Activated B cell treated with CpG ODN at 0.5 μM for 24 hours (primary cell): ENCODE measurements at regions of chr6 and their contacts with region 1.

Region 1: GRCh38 chr6:41735427-41736356 is at the start of gene TFEB:
- DNase-seq: peak; percentile 99
- ATAC-seq: peak; percentile 41
- H3K4me3 Mint-ChIP-seq: peak within 1 kb of the TSS; percentile 84
- H3K27ac Mint-ChIP-seq: peak within 1 kb of the TSS; percentile 84
- H3K4me1 Mint-ChIP-seq: peaks cover 28% of the 10 kb centered on the region
- H3K27me3 Mint-ChIP-seq: no peaks in the 10 kb centered on the region
- CTCF ChIP-seq: peak; percentile 26
- total RNA-seq, gene TFEB: 203 and 205 TPM in 2 replicates

Region 2: DNA sequence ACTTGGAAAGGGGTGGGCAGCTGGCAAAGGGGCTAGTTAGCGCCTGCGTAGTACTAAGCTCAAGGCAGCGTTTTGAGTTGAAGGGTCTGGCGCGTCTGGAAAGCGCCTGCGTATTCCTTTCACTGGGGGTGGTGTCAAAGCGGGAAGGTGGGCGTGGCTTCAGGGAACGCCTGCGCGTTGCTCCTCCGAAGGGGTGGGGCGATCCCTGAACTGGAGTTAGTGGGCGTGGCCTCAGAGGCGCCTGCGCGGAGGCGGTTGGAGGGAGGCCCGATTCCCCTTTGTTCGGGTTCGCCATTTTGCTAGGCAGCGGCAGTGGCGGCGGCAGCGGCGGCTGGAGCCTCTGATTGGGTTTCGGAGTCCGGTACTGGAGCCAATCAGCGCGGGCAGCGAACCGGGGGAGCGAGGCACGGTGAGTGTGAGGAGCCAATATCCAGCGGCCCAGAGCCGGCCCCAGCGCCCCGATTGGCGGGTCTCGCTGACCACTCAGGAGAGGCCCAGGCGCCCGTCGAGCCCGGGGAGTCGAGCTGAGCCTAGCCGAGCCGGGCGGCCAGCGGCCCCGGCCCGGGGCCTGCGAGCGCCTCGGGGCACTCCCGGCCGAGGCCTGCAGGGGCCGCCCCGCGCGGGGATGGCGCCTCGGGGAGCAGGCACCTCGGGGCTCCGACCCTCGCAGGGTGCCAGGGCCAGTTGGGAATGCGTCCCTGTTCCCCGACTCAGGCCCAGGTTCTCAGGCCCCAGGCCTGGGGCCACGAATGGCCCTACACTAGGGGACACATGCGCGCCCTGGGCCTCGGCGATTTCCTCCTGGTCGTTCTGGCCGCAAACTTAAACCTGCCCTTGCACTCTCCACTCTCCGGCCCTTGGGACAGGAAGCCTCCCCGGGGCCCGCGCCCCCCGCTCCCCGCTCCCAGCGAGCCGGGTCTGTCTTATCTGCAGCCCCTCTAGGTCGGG is 662.7 kb before region 1 on chr6 and contains the start of gene NFYA:
- CTCF ChIA-PET with region 1: no interaction called
- POLR2A ChIA-PET with region 1: interaction called, 10 read pairs
- intact Hi-C with region 1: loop called (anchors 1 kb)
- DNase-seq: peak; percentile 100
- ATAC-seq: peak; percentile 63
- H3K4me3 Mint-ChIP-seq: peak within 1 kb of the TSS; percentile 96
- H3K27ac Mint-ChIP-seq: peak within 1 kb of the TSS; percentile 98
- H3K4me1 Mint-ChIP-seq: peaks cover 47% of the 10 kb centered on the region
- H3K27me3 Mint-ChIP-seq: no peaks in the 10 kb centered on the region
- CTCF ChIP-seq: no peak
- total RNA-seq, gene NFYA: 33.7 and 35.1 TPM in 2 replicates

Region 3: DNA sequence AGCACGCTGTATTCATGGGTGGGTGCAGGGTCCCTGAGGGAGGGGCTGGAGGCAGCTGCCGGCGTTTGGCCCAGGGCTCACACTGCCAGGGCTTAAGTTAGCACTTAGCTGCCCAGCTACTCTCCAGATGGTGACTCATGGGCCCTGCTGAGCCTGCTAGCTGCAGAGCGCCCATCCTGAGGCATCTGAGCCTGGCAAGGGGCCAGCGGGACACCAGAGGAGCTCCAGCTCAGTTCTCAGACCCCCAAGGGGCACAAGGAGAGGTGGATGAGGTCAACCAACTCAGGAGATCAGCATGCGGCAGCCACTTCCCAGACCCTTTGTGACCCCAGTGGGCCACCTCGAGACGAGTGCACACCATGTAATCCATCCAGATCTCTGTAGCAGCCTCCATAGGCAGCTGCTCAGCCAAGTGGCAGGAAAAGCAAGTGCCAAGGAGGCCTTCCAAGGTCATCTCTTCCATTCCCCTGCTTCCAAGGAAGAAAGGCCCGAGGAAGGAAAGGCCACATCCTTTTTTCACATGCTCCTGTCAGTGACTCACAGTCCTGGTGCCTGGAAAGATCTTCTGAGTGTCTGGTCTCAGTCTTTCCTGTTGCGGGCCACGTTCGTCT is 154.2 kb before region 1 on chr6:
- CTCF ChIA-PET with region 1: no interaction called
- POLR2A ChIA-PET with region 1: no interaction called
- intact Hi-C with region 1: no loop called
- DNase-seq: no peak
- ATAC-seq: no peak
- H3K4me3 Mint-ChIP-seq: no peak overlapping the region
- H3K27ac Mint-ChIP-seq: no peak overlapping the region
- H3K4me1 Mint-ChIP-seq: peaks cover 16% of the 10 kb centered on the region
- H3K27me3 Mint-ChIP-seq: no peaks in the 10 kb centered on the region
- CTCF ChIP-seq: no peak

Region 4: DNA sequence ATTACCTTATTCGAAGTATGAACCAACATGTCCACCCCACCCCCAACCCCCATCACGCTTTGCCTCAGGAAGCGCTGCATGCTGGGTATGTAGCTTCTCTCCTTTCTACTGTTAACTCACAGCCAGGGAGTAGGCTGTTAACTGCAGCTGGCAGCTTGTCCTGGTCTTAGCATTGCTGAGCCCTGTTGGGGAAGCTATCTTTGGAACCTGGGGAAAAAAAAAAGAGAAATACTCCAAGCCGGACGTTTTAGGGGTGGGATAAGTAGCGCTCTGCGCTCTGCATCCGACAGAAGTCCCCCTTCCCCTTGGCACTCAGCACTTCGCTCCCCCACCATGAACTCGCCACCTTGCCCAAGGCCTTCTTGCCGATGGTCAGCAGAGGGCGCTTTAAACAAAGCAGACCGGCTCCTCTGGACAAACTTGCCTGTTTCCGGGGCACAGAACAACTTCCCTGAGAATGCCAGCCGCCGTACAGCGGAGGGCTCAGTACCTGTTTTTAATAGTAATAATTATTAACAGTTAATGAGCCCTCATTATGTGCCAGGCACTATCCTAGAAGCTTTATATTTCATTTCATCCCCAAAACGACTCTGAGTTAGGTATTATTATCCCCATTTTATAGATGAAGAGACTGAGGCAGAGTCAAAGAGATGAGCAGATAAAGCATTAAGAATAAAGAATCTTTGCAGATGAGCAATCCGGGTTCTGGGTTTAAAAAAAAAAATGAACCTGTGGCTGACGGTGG is 132.7 kb before region 1 on chr6:
- CTCF ChIA-PET with region 1: interaction called, 3 read pairs
- POLR2A ChIA-PET with region 1: interaction called, 13 read pairs
- intact Hi-C with region 1: loop called (anchors 2 kb)
- DNase-seq: peak; percentile 55
- ATAC-seq: peak; percentile 85
- H3K4me3 Mint-ChIP-seq: peak overlapping the region; percentile 46
- H3K27ac Mint-ChIP-seq: no peak overlapping the region
- H3K4me1 Mint-ChIP-seq: peaks cover 10% of the 10 kb centered on the region
- H3K27me3 Mint-ChIP-seq: no peaks in the 10 kb centered on the region
- CTCF ChIP-seq: no peak

Region 5: GRCh38 chr6:41689171-41690008 is 46.3 kb before region 1 on chr6:
- CTCF ChIA-PET with region 1: interaction called, 32 read pairs
- POLR2A ChIA-PET with region 1: interaction called, 126 read pairs
- intact Hi-C with region 1: no loop called
- DNase-seq: no peak
- ATAC-seq: no peak
- H3K4me3 Mint-ChIP-seq: no peak overlapping the region
- H3K27ac Mint-ChIP-seq: peak overlapping the region; percentile 50
- H3K4me1 Mint-ChIP-seq: peaks cover 23% of the 10 kb centered on the region
- H3K27me3 Mint-ChIP-seq: no peaks in the 10 kb centered on the region
- CTCF ChIP-seq: no peak

Region 6: GRCh38 chr6:41713161-41713649 is 22.5 kb before region 1 on chr6:
- CTCF ChIA-PET with region 1: interaction called, 196 read pairs
- POLR2A ChIA-PET with region 1: interaction called, 1,669 read pairs
- intact Hi-C with region 1: loop called (anchors 2 kb)
- DNase-seq: no peak
- ATAC-seq: no peak
- H3K4me3 Mint-ChIP-seq: peak overlapping the region; percentile 70
- H3K27ac Mint-ChIP-seq: peak overlapping the region; percentile 90
- H3K4me1 Mint-ChIP-seq: peaks cover 97% of the 10 kb centered on the region
- H3K27me3 Mint-ChIP-seq: no peaks in the 10 kb centered on the region
- CTCF ChIP-seq: no peak

Region 7: GRCh38 chr6:41787219-41787917 is 51.7 kb after region 1 on chr6 and contains the start of gene TOMM6:
- CTCF ChIA-PET with region 1: interaction called, 6 read pairs
- POLR2A ChIA-PET with region 1: interaction called, 39 read pairs
- intact Hi-C with region 1: loop called (anchors 1 kb)
- DNase-seq: peak; percentile 91
- ATAC-seq: peak; percentile 83
- H3K4me3 Mint-ChIP-seq: peak within 1 kb of the TSS; percentile 97
- H3K27ac Mint-ChIP-seq: peak within 1 kb of the TSS; percentile 97
- H3K4me1 Mint-ChIP-seq: peaks cover 28% of the 10 kb centered on the region
- H3K27me3 Mint-ChIP-seq: no peaks in the 10 kb centered on the region
- CTCF ChIP-seq: peak; percentile 66
- total RNA-seq, gene TOMM6: 219 and 252 TPM in 2 replicates

Region 8: DNA sequence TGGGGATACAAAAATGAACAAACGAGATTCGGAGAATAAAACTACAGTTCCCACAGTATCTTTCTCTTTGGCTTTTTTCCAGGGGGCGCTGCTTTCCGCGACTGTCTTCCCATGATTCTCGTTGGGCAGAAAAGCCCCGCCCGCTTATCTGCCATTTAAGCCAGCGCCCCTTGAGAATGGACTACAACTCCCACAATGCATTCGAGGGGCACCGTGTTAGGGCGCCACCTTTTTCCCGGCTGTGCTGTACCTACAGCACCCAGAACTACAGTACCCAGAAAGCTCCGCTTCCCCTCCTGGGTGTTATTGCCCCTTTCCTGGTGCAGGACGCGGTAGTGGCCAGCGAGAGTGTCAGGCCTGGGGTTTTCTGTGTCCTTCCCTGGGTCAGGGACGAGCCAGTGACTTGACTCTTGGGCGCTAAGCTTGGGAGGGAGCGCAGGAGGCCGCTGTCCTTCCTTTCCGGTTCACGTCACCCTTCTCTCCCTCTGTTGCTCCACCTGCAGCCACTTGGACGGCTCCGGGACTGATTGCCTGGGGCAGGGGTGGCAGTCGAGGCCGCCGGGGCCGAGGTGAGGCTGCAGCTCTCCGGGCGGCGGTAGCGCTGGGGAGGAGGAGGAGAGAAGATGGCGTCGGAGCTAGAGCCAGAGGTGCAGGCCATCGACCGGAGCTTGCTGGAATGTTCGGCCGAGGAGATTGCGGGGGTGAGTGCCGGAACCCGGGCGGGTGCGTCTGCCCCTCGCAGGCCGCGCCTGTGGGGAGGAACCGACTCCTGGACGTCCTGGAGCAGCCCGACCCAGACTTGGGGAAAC is 828.2 kb after region 1 on chr6 and contains the start of gene UBR2:
- CTCF ChIA-PET with region 1: no interaction called
- POLR2A ChIA-PET with region 1: no interaction called
- intact Hi-C with region 1: loop called (anchors 5 kb)
- DNase-seq: peak; percentile 73
- ATAC-seq: peak; percentile 96
- H3K4me3 Mint-ChIP-seq: peak within 1 kb of the TSS; percentile 92
- H3K27ac Mint-ChIP-seq: peak within 1 kb of the TSS; percentile 92
- H3K4me1 Mint-ChIP-seq: peaks cover 43% of the 10 kb centered on the region
- H3K27me3 Mint-ChIP-seq: no peaks in the 10 kb centered on the region
- CTCF ChIP-seq: no peak
- total RNA-seq, gene UBR2: 34.3 and 40.8 TPM in 2 replicates